Heart right ventricle (tissue), 16 donors: ENCODE measurements at regions of chr1 and their contacts with region 1.

Region 1: GRCh38 chr1:62962901-62963776 is 179.2 kb downstream of the ATG4C start:
- DNase-seq: peak in 1 of 2 donors; percentile 12
- ATAC-seq: peak in 6 of 8 donors; percentile 44 to 73 (median 65)
- H3K4me3 ChIP-seq: no peak overlapping the region
- H3K27ac ChIP-seq: no peak overlapping the region
- H3K4me1 ChIP-seq: peaks cover 0 to 6% (median 0%) of the 10 kb centered on the region in 9 donors
- H3K27me3 ChIP-seq: peaks cover 0 to 29% (median 11%) of the 10 kb centered on the region in 7 donors
- CTCF ChIP-seq: peak in 7 of 9 donors; percentile 32 to 55 (median 45)

Region 2: DNA sequence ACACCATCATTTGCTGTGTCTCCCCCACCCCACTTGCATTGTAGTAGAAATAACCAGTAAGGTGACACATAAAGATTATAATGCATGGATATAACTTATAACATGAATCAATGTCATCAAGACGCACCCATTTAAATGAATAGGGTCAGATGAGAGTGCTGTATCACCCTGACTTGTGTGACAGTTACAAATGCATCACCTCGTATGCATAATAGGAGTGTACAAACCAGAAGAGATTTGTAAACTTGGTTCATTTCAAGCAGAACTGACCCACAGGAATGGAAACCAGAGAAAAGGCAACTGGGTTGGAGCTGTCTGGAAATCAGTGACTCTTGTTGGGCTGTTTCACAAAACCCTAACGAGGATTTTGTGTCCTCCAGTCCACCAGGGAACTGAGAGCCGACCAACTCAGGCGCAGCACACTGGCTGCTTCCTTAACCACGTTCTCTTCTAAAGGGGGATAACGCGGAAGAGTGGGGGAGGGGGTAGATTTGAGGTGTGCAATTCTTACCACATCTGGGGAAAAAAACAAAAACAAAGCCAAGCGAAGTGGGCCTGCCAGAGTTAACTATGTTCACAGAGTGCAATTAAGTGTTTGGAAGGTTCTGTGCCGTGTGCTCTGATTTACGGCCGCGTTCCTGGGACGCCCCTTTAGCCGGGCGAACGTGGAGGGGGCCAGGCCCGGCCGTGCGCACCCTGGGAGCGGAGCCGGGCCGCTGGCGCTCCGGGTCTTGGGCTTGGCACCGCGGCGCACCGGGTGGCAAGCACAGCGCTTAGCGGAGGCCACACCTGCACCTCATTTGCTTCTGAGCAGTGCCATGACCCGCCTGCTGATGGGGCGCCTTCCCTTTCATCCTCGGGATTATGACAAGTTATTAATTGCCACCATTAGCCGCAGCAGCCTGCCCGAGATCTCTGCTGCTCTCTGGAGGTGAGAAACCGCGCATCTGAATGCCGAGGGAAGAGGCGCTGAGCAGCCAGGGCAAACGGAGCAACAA is 110.5 kb after region 1 on chr1:
- intact Hi-C with region 1: loop called in 2 of 10 experiments (anchors 10 kb)
- DNase-seq: no peak
- ATAC-seq: peak in 3 of 8 donors; percentile 49 to 67 (median 52)
- H3K4me3 ChIP-seq: peak overlapping the region in 8 of 10 donors; percentile 21 to 49 (median 32)
- H3K27ac ChIP-seq: no peak overlapping the region
- H3K4me1 ChIP-seq: peaks cover 0 to 8% (median 0%) of the 10 kb centered on the region in 9 donors
- H3K27me3 ChIP-seq: peaks cover 6 to 80% (median 61%) of the 10 kb centered on the region in 7 donors
- CTCF ChIP-seq: peak in 6 of 9 donors; percentile 25 to 51 (median 44)

Region 3: GRCh38 chr1:63148825-63149645 is 185.9 kb after region 1 on chr1:
- intact Hi-C with region 1: loop called in 1 of 10 experiments (anchors 5 kb)
- DNase-seq: no peak
- ATAC-seq: no peak
- H3K4me3 ChIP-seq: no peak overlapping the region
- H3K27ac ChIP-seq: no peak overlapping the region
- H3K4me1 ChIP-seq: no peaks in the 10 kb centered on the region
- H3K27me3 ChIP-seq: peaks cover 0 to 32% (median 24%) of the 10 kb centered on the region in 7 donors
- CTCF ChIP-seq: peak in 8 of 9 donors; percentile 11 to 58 (median 38)

Region 4: GRCh38 chr1:63203641-63204040 is 240.5 kb after region 1 on chr1:
- intact Hi-C with region 1: no loop called
- DNase-seq: no peak
- ATAC-seq: no peak
- H3K4me3 ChIP-seq: no peak overlapping the region
- H3K27ac ChIP-seq: no peak overlapping the region
- H3K4me1 ChIP-seq: no peaks in the 10 kb centered on the region
- H3K27me3 ChIP-seq: peaks cover 0 to 43% (median 16%) of the 10 kb centered on the region in 7 donors
- CTCF ChIP-seq: no peak